IMR-90 (cell line): ENCODE measurements at regions of chr14 and their contacts with region 1.

Region 1: DNA sequence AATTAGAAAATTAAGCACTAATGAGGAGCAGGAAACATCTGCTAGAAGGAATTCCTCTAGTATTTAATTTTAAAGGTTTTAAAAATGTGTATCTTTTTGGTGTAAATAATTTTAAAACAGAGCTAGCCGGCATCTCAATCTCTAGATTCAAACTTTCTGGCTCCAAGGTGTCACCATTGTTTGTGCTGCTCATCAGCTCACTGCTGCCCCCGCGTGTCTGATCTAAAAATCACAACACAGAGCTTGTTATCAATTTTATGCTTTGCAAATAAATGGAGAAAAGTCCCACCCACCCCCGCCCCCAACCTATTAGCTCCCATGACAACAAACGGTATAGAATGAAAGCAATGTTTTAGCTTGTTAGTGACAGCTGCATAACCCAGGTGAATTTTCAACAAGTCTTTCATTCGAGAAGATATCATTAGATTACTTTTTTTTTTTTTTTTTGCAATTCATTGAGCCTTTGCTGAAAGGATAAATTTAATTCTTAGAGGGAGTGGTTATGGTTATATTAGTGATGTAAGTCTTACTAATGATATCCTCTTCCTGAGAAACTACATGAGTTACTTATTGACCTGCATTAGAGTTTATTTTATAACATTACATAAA is 11.3 kb upstream of the ABHD12B start:
- DNase-seq: peak; percentile 81
- ATAC-seq: peak; percentile 71
- H3K4me3 ChIP-seq: no peak overlapping the region; the same call in 1 of the 2 replicates
- H3K27ac ChIP-seq: no peak overlapping the region
- H3K4me1 ChIP-seq: peaks cover 14% of the 10 kb centered on the region
- H3K27me3 ChIP-seq: no peaks in the 10 kb centered on the region
- CTCF ChIP-seq: peak; percentile 75
- POLR2A ChIP-seq: no peak
- RAD21 ChIP-seq: peak; percentile 80

Region 2: GRCh38 chr14:50542941-50543418 is 317.6 kb before region 1 on chr14:
- CTCF ChIA-PET with region 1: interaction called, 3 read pairs
- POLR2A ChIA-PET with region 1: no interaction called
- dilution Hi-C with region 1: no loop called
- in situ Hi-C with region 1: no loop called
- intact Hi-C with region 1: loop called (anchors 1 kb)
- DNase-seq: peak; percentile 61
- ATAC-seq: peak; percentile 79
- H3K4me3 ChIP-seq: no peak overlapping the region
- H3K27ac ChIP-seq: no peak overlapping the region
- H3K4me1 ChIP-seq: no peaks in the 10 kb centered on the region
- H3K27me3 ChIP-seq: no peaks in the 10 kb centered on the region; the same call in 1 of the 2 replicates
- CTCF ChIP-seq: peak; percentile 56
- POLR2A ChIP-seq: no peak
- RAD21 ChIP-seq: peak; percentile 58

Region 3: GRCh38 chr14:50667996-50668825 is 192.4 kb before region 1 on chr14 and contains the start of gene SAV1:
- CTCF ChIA-PET with region 1: no interaction called
- POLR2A ChIA-PET with region 1: interaction called, 8 read pairs
- dilution Hi-C with region 1: no loop called
- in situ Hi-C with region 1: no loop called
- intact Hi-C with region 1: loop called (anchors 10 kb)
- DNase-seq: peak; percentile 87
- ATAC-seq: peak; percentile 86
- H3K4me3 ChIP-seq: peak within 1 kb of the TSS; percentile 90
- H3K27ac ChIP-seq: peak within 1 kb of the TSS; percentile 98
- H3K4me1 ChIP-seq: peaks cover 13% of the 10 kb centered on the region
- H3K27me3 ChIP-seq: no peaks in the 10 kb centered on the region
- CTCF ChIP-seq: no peak
- POLR2A ChIP-seq: peak; percentile 98
- RAD21 ChIP-seq: no peak
- total RNA-seq, gene SAV1: 18.8 and 25.0 TPM in 2 replicates

Region 4: DNA sequence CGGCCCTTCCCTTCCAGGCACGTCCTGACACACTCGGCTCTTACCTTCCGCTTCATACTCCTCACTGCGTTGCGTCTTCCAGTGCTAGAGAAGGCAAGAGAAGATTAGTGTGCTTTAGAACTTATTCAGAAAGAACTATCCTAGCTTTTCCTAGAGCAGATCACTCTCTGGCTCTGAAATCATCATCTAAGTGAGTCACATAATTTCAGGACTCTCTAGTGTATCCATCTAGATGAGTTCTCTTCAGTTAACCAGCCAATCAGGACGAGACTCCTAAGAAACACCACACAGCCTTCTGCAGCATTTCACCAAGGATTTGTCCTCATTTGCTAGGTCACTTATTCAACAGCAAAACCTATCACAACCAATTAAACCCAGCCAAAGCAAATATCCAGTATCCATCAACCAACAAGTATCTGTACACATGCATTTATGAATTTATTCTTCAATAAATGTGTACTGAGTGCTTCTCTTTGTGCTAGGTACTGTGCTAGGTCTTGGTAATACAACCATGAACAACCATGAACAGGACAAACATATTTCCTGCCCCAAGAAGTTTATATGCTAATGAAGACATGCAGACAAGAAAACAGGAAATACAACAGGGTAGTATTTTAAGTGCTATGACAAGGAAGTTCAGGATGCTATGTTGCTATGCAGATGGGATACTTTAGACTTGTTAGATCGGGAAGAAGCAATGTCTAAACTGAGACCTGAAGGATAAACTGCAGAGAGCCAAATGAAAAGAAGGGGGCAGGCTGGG is 81.7 kb before region 1 on chr14:
- CTCF ChIA-PET with region 1: interaction called, 31 read pairs
- POLR2A ChIA-PET with region 1: interaction called, 5 read pairs
- dilution Hi-C with region 1: no loop called
- in situ Hi-C with region 1: no loop called
- intact Hi-C with region 1: loop called (anchors 1 kb)
- DNase-seq: peak; percentile 76
- ATAC-seq: no peak
- H3K4me3 ChIP-seq: no peak overlapping the region
- H3K27ac ChIP-seq: no peak overlapping the region
- H3K4me1 ChIP-seq: peaks cover 11% of the 10 kb centered on the region
- H3K27me3 ChIP-seq: no peaks in the 10 kb centered on the region
- CTCF ChIP-seq: no peak
- POLR2A ChIP-seq: no peak
- RAD21 ChIP-seq: no peak

Region 5: GRCh38 chr14:50830932-50831725 is 29.5 kb before region 1 on chr14 and contains the start of gene NIN:
- CTCF ChIA-PET with region 1: interaction called, 4 read pairs
- POLR2A ChIA-PET with region 1: interaction called, 3 read pairs
- dilution Hi-C with region 1: no loop called
- in situ Hi-C with region 1: no loop called
- intact Hi-C with region 1: loop called (anchors 2 kb)
- DNase-seq: peak; percentile 73
- ATAC-seq: peak; percentile 98
- H3K4me3 ChIP-seq: peak within 1 kb of the TSS; percentile 73
- H3K27ac ChIP-seq: peak within 1 kb of the TSS; percentile 73
- H3K4me1 ChIP-seq: peaks cover 16% of the 10 kb centered on the region
- H3K27me3 ChIP-seq: no peaks in the 10 kb centered on the region
- CTCF ChIP-seq: no peak
- POLR2A ChIP-seq: no peak
- RAD21 ChIP-seq: no peak
- total RNA-seq, gene NIN: 98.4 and 99.2 TPM in 2 replicates